Left colon (tissue), 2 donors: ENCODE measurements at regions of chr14 and their contacts with region 1.

Region 1: DNA sequence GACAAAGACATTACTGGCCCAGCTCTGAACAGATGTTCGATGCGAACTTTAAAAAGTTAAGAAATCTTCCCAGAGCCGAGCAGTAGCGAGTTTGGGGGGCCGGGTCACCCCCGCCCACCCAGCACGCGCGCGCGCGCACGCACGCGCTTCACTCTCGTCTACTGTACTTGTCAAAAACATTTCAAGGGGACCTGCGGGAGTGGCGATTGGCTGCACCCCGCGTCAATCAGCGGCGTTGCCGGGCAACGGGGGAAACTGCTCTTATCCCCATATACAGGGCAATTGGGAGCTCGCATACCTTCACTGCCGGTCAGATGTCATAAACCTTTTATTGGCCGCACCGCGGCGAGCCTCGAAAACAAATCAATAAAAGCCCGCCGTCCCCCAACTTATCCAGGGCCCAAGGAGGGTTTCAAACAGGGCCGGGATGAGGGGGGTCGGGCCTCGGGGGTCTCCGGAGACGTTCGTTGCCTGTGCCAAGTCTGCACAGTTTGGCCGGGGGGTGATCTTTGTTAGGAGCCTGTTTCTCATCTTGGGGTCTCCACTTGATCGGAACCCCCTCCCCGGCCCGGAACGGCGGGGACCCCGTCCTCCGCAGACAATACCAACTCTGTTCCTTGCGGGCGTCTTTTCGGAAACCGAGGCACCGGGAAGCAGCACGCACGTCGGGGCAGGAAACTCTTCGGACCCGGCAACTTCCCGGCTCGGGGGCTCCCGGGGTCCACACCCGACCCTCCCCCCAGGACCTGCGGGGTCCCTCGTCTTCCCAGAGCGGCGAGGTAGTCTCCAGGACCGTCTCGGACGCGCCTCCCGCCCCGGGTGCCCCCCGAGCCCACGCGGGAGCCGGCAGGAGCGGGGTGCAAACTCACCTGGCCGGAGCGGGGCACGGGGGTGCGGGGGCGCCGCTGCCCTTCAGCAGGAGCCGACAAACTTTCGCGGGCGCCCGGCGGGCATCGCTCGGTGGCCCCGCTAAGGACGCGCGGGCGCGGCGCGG is 734 bp downstream of the FOXN3 start:
- DNase-seq: peak; percentile 97 to 99
- ATAC-seq: peak; percentile 80

Region 2: GRCh38 chr14:89270439-89271227 is 145.7 kb before region 1 on chr14:
- intact Hi-C with region 1: no loop called
- DNase-seq: peak; percentile 70 to 83
- ATAC-seq: peak; percentile 98

Region 3: DNA sequence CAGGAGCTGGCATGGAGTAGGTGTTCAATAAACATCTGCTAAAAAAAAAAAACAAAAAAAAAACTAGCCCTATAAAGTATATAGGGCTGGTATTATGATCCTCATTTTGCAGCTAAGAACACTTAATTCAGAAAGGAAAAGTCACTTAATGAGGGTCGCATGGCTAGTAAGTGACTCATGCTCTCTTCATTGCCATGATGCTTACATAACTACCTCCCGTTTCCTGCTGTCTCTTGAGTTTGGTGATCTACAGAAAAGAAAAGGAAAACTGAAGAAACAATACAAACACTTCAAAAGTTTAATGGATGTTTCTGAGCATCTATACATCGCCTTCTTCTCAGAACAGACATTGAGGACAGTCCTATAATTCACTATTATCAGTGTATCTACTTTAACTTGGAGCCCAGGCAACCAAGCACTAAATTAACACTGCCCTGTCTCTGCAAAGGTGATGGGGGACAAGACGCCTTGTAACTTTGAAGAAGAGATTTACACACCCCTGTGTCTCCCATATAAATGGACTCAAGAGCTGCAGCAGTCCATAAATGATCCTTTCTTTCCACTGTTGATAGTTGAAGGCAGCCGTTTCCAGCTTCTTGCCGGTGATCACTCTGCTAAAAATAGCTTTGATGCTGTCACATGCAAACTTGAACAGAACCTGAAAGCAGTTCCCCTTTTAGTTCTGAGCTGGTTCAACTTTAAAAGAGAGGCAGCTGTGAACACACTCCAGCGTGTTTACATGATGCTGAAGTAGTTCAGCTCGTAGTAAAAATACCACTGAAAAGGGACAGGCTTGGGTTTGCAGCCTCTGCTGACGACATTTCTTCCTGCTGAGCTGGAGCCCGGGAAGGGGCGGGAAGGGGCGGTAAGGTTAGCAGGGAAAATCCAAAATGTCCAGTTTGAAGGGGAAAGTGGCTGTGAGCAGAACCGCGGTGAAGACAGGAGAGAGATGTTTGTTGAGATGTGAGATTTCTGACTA is 112.6 kb before region 1 on chr14:
- intact Hi-C with region 1: loop called in 1 of 2 experiments (anchors 10 kb)
- DNase-seq: peak; percentile 37 to 62
- ATAC-seq: peak; percentile 47